Right cardiac atrium (tissue), 5 donors: ENCODE measurements at regions of chr2 and their contacts with region 1.

Region 1: DNA sequence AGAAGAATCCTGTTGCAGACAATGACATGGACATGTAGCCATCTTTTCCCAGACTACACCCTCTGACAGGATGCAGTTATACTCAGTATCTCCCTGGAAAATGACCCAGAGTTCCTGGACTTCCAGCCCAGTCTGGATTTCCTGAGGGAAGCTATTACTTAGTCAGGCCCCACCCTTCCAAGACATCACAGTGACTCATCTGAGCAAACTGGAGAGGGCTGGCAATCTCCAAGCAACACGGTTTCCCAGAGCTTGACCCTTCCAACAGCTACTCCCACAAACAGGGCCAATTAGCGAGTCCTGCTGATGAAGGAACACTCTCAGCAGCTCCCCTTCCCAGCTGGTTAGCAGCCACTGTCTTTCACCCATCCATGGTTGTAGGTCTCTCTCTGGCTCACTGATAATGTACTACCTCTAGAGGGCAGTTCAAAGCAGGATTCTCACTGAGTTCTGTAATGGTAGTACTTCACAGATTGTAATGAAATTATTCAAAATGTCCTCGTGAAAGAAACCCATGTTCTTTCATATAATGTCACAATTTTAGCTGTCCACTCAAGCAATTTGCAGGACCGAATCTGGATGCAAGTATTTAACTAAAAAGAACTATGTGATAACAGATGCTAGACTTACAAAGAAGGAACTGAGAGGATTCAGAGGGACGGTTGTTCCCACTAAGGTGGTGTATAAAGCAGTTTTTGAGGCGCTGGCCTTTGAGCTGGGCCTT is 110.2 kb downstream of the MDH1 start:
- DNase-seq: peak; percentile 62 to 74 (median 71)
- ATAC-seq: peak; percentile 93 to 99
- H3K4me3 ChIP-seq: no peak overlapping the region
- H3K27ac ChIP-seq: peak overlapping the region; percentile 40
- H3K4me1 ChIP-seq: no peaks in the 10 kb centered on the region
- H3K27me3 ChIP-seq: no peaks in the 10 kb centered on the region

Region 2: GRCh38 chr2:63399156-63399555 is 299.8 kb before region 1 on chr2:
- intact Hi-C with region 1: no loop called
- DNase-seq: no peak
- ATAC-seq: no peak
- H3K4me3 ChIP-seq: no peak overlapping the region
- H3K27ac ChIP-seq: no peak overlapping the region
- H3K4me1 ChIP-seq: no peaks in the 10 kb centered on the region
- H3K27me3 ChIP-seq: no peaks in the 10 kb centered on the region

Region 3: DNA sequence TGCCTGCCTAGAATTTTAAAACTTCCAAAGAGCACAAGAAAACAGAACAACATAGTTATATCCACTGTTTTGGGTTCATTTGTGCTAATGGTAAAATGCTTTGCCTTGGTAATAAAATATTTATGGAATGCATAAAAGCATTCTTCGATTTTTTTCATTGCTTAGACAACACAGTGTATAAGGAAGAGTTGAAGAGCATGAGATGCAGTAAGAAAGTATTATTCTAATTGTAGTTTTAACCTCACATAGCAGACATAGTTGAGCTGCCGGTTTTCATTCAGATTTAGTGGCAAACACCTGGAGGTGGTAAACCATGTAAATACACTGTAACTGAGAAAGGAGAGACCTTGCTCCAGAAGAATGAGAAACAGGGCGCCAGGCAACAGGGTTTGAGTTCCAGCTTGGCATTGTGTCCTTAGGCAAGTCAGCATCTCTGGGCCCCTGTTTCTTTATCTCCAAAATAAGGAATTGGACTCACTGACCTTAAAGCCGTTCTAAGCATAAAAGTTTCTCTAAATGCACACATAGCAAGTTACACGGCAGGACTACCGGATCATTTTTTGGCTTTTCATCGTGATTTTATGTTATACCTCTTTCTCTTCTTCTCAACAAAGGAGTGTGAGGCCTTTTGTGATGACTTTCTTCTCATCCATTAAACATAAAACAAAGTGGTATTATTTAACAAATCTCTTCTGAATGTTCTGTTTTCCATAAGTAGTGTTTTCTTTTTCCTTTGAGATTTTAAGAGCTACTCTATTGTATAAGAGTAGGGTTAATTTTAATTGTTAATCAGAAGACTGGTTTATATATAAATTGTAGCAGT is 150.6 kb after region 1 on chr2:
- intact Hi-C with region 1: loop called in 1 of 4 experiments (anchors 5 kb)
- DNase-seq: no peak
- ATAC-seq: no peak
- H3K4me3 ChIP-seq: no peak overlapping the region
- H3K27ac ChIP-seq: peak overlapping the region; percentile 1
- H3K4me1 ChIP-seq: peaks cover 12% of the 10 kb centered on the region
- H3K27me3 ChIP-seq: no peaks in the 10 kb centered on the region

Region 4: DNA sequence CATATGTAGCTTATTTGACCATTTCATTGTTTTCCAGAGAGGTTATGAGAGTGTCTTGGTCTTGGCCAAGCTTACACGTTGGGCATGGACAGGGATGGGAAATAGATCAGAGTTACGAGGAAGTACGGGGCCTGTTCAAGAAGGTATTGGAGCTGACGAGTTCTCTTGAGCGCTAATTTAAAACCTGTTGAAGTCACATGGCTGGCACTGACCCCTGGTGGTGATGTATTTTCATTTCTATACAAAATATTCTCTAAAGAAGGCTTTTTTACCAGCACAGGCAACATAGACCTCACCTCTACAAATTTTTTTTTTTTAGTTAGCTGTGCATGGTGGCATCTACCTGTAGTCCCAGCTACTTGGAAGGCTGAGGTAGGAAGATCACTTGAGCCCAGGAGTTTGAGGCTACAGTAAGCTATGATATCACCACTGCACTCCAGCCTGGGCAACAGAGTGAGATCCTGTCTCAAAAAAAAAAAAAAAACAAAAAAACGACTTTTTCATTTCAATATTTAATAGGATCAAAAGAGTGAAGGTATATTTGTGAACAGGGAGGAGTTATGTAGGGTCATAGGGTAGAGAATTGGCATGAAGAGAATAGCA is 162.3 kb after region 1 on chr2:
- intact Hi-C with region 1: loop called in 3 of 4 experiments (anchors 5 to 10 kb)
- DNase-seq: peak in 2 of 3 donors; percentile 47 to 59
- ATAC-seq: peak; percentile 72 to 83
- H3K4me3 ChIP-seq: no peak overlapping the region
- H3K27ac ChIP-seq: peak overlapping the region; percentile 71
- H3K4me1 ChIP-seq: no peaks in the 10 kb centered on the region
- H3K27me3 ChIP-seq: no peaks in the 10 kb centered on the region

Region 5: GRCh38 chr2:63888490-63889402 is 189.8 kb after region 1 on chr2:
- intact Hi-C with region 1: loop called in 1 of 4 experiments (anchors 10 kb)
- DNase-seq: peak in 2 of 3 donors; percentile 37 to 55
- ATAC-seq: peak; percentile 73
- H3K4me3 ChIP-seq: no peak overlapping the region
- H3K27ac ChIP-seq: no peak overlapping the region
- H3K4me1 ChIP-seq: no peaks in the 10 kb centered on the region
- H3K27me3 ChIP-seq: no peaks in the 10 kb centered on the region